Heart left ventricle (tissue), 16 donors: ENCODE measurements at regions of chr4 and their contacts with region 1.

Region 1: DNA sequence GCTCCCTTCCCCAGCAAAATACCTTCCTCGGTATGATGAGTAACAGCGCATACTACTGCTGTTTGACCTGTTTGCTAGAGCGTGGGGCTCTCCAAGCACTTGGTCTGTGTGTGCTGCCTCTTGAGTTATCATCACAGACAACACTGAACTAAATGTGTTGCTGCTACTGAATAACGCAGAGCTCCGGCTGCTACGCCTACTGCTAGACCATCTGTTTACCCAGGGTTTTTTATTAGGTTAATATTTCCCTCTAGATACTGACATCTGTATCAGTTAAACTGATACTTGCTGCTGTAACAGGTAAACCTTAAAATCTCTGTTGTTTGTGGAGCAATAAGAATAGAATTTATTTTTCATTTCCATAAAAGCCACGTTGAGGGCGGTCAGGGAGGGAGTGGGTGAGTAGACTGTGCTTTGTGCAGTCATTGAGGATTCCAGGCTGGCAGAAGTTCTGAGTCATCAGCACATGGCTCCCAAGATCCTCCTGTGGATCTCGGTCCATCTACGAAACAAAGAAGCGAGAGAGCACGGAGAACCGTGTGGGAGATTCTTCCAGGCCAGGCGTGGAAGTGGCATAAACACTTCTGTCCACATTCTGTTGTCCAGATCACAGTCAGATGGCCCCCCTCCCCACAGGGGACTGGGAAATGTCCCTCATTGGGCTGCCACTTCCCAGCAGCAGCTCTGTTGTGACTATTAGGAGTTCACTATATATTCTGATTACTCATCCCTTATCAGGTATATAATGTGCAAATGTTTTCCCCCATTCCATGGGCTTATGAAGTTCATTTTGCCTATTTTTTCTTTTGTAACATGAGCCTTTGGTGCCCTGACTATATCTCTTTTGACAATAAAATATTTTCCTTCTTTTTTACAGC is 14.1 kb downstream of the GRK4 start:
- DNase-seq: no peak
- ATAC-seq: peak in 3 of 4 donors; percentile 60 to 71 (median 69)
- H3K4me3 ChIP-seq: no peak overlapping the region
- H3K27ac ChIP-seq: no peak overlapping the region
- H3K4me1 ChIP-seq: peaks cover 0 to 13% (median 3%) of the 10 kb centered on the region in 12 donors
- H3K27me3 ChIP-seq: no peaks in the 10 kb centered on the region
- CTCF ChIP-seq: no peak
- POLR2A ChIP-seq: no peak

Region 2: DNA sequence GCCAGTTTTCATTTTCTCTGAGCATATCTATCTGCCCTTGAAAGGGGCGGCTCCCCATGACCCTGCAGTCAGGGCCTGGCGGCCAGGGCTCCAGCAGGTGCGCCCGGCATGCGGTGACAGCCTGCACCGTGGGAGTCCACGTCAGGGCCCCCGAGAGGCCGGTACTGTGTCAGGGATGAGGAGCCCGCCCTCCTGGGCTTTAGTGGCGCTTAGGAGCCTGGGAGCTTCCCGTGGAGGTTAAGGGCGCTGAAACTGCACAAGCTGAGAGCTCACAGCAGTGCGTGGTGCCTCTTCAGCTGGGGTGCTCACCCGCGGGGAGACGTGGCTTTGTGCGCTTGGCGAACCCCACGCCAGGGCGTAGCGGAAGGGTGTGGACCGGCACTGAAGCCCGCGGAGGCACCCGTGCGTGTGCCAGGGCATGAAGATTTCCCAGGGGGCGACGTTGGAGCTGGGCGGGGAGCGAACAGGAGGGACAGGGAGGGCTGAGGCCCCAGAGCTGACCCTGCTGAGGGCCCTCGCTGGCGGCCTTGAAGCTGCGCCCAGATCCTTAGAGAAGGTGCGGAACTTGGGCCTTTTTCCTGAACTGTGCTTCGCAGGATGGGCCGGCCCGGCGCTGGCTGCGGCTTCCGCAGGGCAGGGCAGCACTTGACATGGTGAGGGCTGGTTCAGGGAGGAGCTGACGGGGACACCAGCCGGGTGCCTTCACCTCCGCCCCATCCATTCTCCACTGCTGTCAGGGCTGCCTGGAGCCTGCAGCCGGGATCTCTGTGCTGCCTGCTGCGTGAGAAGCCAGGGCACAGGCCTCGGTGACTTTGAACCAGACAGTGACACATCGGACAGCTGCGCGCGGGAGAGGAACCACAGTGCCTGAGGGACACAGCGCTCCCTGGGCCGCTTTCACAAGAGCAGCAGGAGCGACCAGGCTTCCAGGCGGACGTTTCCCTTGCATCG is 64.0 kb after region 1 on chr4:
- intact Hi-C with region 1: loop called in 3 of 10 experiments (anchors 2 to 5 kb)
- DNase-seq: peak; percentile 48 to 81 (median 67)
- ATAC-seq: peak; percentile 23 to 79 (median 58)
- H3K4me3 ChIP-seq: peak overlapping the region; percentile 19 to 63 (median 56)
- H3K27ac ChIP-seq: peak overlapping the region; percentile 36 to 88 (median 70)
- H3K4me1 ChIP-seq: peaks cover 0 to 62% (median 25%) of the 10 kb centered on the region in 12 donors
- H3K27me3 ChIP-seq: no peaks in the 10 kb centered on the region
- CTCF ChIP-seq: no peak
- POLR2A ChIP-seq: no peak

Region 3: DNA sequence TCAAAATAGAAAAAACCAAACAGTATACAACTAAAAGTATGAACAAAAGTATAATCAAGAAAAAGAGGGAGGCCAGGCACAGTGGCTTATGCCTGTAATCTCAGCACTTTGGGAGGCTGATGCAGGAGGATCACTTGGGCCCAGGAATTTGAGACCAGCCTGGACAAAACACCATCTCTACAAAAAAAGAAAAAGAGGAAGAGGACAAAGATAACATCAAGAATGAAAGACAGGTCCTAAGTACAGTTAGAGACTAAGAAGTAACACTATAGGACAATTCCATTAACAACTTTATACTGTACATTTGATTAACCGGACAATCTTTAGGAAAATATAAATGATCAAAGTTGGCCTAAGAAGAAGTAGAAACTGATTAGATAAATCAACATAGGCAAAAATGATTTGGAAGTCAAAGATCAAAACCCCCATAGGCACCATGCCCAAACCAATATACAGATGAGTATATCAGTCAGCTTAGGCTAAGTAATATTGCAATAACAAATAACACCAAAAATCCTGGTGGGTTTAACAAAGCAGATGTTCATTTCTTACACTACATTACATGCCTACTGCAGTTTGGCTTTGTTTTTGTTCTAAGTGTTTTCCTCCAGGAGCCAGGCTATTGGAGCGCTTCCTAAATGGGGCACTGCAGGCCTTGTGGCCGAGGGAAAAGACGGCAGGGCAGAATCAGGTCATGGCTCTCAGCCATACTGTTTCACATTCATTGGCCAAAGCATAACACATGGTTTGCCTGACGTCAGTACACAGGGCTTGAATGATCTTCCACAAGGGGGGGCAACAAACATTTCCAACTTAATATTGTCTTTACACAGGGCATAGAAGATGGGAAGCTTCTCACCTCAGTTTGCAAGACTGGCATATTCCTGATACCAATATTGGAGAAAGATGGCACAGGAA is 422.1 kb after region 1 on chr4:
- intact Hi-C with region 1: no loop called
- DNase-seq: peak in 2 of 5 donors; percentile 45 to 62
- ATAC-seq: peak; percentile 82 to 96 (median 90)
- H3K4me3 ChIP-seq: no peak overlapping the region
- H3K27ac ChIP-seq: peak overlapping the region in 2 of 12 donors; percentile 6 to 39
- H3K4me1 ChIP-seq: peaks cover 0 to 30% (median 4%) of the 10 kb centered on the region in 12 donors
- H3K27me3 ChIP-seq: no peaks in the 10 kb centered on the region
- CTCF ChIP-seq: peak in 6 of 12 donors; percentile 10 to 39 (median 20)
- POLR2A ChIP-seq: no peak